ENCODE measurements at regions of chr6 and their contacts with region 1.

Region 1: GRCh38 chr6:72411872-72412708 is 209.8 kb upstream of the KCNQ5 start:
- DNase-seq: peak; percentile 67
- H3K4me3 ChIP-seq: peak overlapping the region in 1 of 2 experiments; percentile 22; a peak in 1 of 4 replicates
- H3K27ac ChIP-seq: no peak overlapping the region
- H3K4me1 ChIP-seq: peaks cover 0 to 5% of the 10 kb centered on the region in 2 experiments; a peak in 3 of 4 replicates
- H3K27me3 ChIP-seq: no peaks in the 10 kb centered on the region
- CTCF ChIP-seq: peak; percentile 100
- EP300 ChIP-seq: no peak
- RAD21 ChIP-seq: peak; percentile 100

Region 2: GRCh38 chr6:72316675-72317380 is 95.3 kb before region 1 on chr6:
- CTCF ChIA-PET with region 1: no interaction called
- POLR2A ChIA-PET with region 1: no interaction called
- DNase-seq: no peak
- H3K4me3 ChIP-seq: no peak overlapping the region
- H3K27ac ChIP-seq: no peak overlapping the region
- H3K4me1 ChIP-seq: peaks cover 0 to 6% of the 10 kb centered on the region in 2 experiments; a peak in 3 of 4 replicates
- H3K27me3 ChIP-seq: no peaks in the 10 kb centered on the region
- CTCF ChIP-seq: no peak
- EP300 ChIP-seq: no peak
- RAD21 ChIP-seq: no peak

Region 3: DNA sequence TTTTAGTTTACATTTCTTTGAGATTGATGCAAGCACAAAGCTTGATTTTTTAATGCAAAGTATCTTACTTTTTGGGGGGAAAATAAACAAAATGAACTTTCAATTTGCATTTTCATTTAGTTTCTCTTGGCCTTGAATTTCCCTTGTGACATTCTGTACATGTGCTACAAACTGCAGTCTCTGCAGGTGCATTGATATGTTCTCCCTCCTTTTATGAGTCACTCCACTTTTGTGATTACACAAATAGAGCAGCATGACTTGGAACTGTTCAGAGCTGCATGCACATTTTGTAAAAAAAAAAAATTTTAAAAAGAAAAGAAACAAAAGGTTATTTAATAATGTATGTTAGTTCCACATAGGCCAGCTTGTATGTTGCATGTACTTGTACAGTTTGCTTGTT is 10.2 kb before region 1 on chr6:
- CTCF ChIA-PET with region 1: interaction called, 15 read pairs
- POLR2A ChIA-PET with region 1: no interaction called
- DNase-seq: no peak
- H3K4me3 ChIP-seq: no peak overlapping the region
- H3K27ac ChIP-seq: no peak overlapping the region
- H3K4me1 ChIP-seq: no peaks in the 10 kb centered on the region
- H3K27me3 ChIP-seq: no peaks in the 10 kb centered on the region
- CTCF ChIP-seq: no peak
- EP300 ChIP-seq: no peak
- RAD21 ChIP-seq: no peak

Region 4: DNA sequence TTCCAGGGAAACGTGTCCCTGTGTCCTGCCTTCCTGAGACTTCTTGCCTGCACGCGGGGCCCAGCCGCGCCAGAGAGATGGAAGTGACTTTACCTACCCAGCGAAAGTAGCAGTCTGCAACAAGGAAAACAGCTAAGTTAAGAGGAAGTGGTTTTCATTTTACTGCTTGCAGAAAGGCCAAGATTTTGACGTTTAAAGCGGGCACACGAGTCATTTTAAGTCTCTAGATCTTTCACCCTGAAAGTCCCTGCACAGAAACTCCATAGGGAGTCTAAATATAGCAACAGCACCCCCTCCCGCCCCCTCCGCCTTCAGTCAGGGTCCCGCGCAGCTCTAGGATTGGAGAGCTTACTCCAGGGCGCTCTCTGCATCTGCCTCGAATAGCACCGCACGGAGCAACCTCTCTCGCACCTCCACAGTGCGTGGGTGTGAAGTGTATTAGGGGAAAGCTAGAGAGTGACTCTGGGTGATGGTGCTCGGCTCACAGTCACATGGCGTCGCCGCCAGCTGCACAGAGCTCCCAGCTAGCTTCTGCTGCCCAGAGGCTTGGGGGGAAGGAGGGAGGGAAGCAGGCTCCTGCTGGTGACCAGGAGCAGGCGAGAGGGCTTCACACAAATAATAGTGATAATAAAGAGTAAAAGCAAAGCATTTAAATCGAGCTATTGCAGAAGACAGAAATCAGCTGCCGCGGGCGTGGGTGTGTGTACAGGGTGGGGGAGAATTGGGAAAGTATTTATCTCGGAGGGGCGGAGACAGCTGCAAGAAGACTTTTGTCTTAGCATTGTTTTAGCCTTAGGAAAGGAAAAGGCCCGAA is 208.0 kb after region 1 on chr6:
- CTCF ChIA-PET with region 1: interaction called, 22 read pairs
- POLR2A ChIA-PET with region 1: no interaction called
- DNase-seq: peak; percentile 64
- H3K4me3 ChIP-seq: peak overlapping the region in 1 of 2 experiments; percentile 92; a peak in 2 of 4 replicates
- H3K27ac ChIP-seq: no peak overlapping the region
- H3K4me1 ChIP-seq: peaks cover 9 to 17% of the 10 kb centered on the region in 2 experiments; a peak in 2 of 4 replicates
- H3K27me3 ChIP-seq: no peaks in the 10 kb centered on the region
- CTCF ChIP-seq: no peak
- EP300 ChIP-seq: no peak
- RAD21 ChIP-seq: no peak

Region 5: GRCh38 chr6:73180763-73181619 is 768.9 kb after region 1 on chr6:
- CTCF ChIA-PET with region 1: interaction called, 11 read pairs
- POLR2A ChIA-PET with region 1: no interaction called
- DNase-seq: peak; percentile 56
- H3K4me3 ChIP-seq: peak overlapping the region; percentile 37 to 58
- H3K27ac ChIP-seq: peak overlapping the region; percentile 4 to 28; a peak in 1 of 4 replicates
- H3K4me1 ChIP-seq: peaks cover 2 to 4% of the 10 kb centered on the region in 2 experiments; a peak in 2 of 4 replicates
- H3K27me3 ChIP-seq: no peaks in the 10 kb centered on the region
- CTCF ChIP-seq: peak; percentile 92
- EP300 ChIP-seq: no peak
- RAD21 ChIP-seq: peak; percentile 93

Measured in SK-N-SH (cell line).